Cardiac septum (tissue), 1 donor: ENCODE measurements at regions of chr12 and their contacts with region 1.

Region 1: DNA sequence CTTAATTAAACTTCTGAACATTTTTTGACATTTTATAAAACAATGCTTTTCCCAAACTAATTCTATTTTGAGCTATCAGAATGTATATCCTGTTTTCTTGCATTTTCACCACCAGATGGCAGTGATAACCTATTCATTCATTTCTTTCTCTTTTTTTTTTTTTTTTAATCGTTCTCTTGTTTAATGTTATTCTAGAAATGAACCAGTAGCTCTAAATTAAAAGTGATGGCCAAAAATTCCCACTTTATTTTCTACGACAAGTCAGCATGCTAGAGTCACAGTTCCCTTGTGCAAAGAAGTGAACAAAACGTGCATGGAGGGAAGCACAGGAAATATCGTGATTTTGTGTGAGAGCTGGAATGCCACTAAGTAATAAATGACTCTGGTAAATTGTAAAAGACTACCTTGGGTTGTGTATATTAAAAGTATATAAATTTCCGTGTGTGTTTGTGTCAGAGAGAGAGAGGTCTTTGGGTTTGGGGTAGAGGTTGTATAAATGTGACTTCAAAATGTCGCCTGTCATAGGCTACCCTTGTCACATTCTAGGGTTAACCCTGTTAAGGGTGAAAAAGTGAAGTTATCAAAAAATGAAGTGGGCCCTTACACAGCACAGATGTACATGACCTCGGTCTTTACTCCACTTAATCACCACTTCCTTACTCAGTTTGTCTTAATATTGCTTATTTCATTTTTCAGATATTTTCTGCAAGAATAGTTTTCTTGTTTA is 40.4 kb upstream of the LDHB start:
- DNase-seq: no peak

Region 2: GRCh38 chr12:21989819-21990412 is 291.8 kb after region 1 on chr12:
- intact Hi-C with region 1: loop called (anchors 2 kb)
- DNase-seq: no peak

Region 3: GRCh38 chr12:22016982-22017381 is 318.9 kb after region 1 on chr12:
- intact Hi-C with region 1: loop called (anchors 2 kb)
- DNase-seq: no peak